Activated naive CD4-positive, alpha-beta T cell treated with anti-CD3 and anti-CD28 coated beads for 36 hours (primary cell): ENCODE measurements at regions of chr11 and their contacts with region 1.

Region 1: GRCh38 chr11:110429731-110430266 is at the start of gene FDX1:
- DNase-seq: peak; percentile 86
- H3K4me3 Mint-ChIP-seq: peak within 1 kb of the TSS; percentile 98
- H3K27ac Mint-ChIP-seq: peak within 1 kb of the TSS; percentile 93
- H3K4me1 Mint-ChIP-seq: peaks cover 40% of the 10 kb centered on the region
- H3K27me3 Mint-ChIP-seq: no peaks in the 10 kb centered on the region
- total RNA-seq, gene FDX1: 12.3 to 13.4 TPM

Region 2: GRCh38 chr11:109946322-109946846 is 483.4 kb before region 1 on chr11:
- CTCF ChIA-PET with region 1: interaction called, 3 read pairs
- intact Hi-C with region 1: loop called (anchors 1 kb)
- DNase-seq: peak; percentile 83
- H3K4me3 Mint-ChIP-seq: peak overlapping the region; percentile 3
- H3K27ac Mint-ChIP-seq: no peak overlapping the region
- H3K4me1 Mint-ChIP-seq: peaks cover 6% of the 10 kb centered on the region
- H3K27me3 Mint-ChIP-seq: peaks cover 6% of the 10 kb centered on the region

Region 3: DNA sequence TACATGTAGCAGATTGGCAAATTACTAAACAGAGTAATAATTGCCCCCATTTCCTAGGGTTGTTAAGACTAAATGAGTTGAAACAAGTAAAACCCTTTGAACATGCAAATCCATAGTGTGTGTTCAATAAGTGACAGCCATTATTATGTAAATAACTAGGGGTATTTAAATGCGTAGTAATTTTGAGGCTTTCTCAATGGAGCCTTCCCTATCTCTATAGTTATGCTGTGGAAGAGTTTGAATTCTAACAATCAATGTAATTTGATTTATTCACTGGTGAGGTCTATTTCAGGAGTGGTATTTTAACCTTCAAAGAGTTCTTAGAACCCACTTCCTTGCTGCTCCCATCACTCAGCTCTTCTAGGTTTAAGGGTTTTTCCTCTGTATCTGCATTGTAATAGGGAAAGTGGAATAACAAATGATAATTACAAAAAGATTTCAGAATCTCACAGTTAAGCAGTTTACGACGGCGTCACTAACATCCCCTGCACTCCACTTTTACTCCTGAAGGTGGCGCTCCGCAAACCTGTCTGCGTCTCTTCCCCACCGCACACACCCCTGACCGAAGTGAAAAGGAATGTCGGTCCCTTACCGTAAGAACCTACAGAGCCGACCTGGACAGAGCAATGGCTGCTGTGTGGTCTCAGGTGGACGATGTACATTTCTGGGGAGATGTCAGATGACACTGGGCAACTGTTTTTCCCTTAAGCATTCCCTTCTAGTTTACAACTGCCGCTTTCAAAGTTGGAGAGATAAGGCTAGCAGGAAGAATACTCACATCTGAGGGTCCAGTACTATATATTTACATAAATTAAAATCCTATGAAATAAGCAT is 255.8 kb before region 1 on chr11:
- CTCF ChIA-PET with region 1: no interaction called
- intact Hi-C with region 1: loop called (anchors 1 kb)
- DNase-seq: peak; percentile 83
- H3K4me3 Mint-ChIP-seq: no peak overlapping the region
- H3K27ac Mint-ChIP-seq: no peak overlapping the region
- H3K4me1 Mint-ChIP-seq: peaks cover 6% of the 10 kb centered on the region
- H3K27me3 Mint-ChIP-seq: peaks cover 4% of the 10 kb centered on the region

Region 4: DNA sequence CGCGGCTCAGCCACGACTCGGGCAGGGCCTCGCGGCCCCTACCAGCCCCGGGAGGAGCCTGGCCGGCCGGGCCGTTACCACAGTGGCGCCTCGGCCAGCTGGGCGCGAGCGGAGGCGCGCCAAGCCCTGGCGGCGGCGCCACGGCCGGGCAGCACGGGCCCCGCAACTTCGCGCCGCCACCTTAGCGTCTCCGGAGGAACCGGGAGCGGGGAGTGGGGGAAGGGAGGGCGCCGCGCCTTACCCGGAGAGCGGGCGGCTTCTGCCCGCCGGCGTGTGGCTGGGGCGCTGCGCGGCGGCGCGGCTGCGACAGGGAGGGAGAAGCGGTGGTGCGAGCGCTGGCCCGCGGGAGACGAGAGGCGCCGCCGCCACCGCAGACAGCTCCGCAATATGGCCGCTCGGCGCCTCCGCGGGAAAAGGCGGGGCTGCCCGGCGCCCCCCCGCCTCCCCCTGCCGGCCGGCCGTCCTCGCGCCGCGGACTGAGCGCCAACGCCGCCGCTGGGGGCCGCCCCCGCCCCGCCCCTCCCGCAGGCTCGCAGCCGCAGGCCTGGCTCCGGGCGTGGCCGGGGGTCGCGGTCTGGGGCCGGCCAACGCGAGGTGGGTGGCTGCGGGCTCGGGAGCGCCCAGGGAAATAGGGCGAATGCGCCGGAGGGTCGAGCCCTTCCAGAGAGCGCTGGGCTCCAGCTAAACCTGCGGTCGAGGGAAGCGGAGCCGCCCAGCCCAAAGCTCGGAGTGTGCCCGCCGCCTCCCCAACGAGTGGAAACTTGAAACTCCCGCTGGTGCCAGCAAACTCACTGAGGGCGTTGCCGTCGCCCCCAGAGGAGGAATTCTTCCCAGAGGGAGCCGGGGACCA is 133.3 kb before region 1 on chr11 and contains the start of gene RDX:
- CTCF ChIA-PET with region 1: no interaction called
- intact Hi-C with region 1: loop called (anchors 1 kb)
- DNase-seq: peak; percentile 53
- H3K4me3 Mint-ChIP-seq: peak within 1 kb of the TSS; percentile 91
- H3K27ac Mint-ChIP-seq: peak within 1 kb of the TSS; percentile 83
- H3K4me1 Mint-ChIP-seq: peaks cover 39% of the 10 kb centered on the region
- H3K27me3 Mint-ChIP-seq: no peaks in the 10 kb centered on the region
- total RNA-seq, gene RDX: 35.2 to 37.4 TPM

Region 5: DNA sequence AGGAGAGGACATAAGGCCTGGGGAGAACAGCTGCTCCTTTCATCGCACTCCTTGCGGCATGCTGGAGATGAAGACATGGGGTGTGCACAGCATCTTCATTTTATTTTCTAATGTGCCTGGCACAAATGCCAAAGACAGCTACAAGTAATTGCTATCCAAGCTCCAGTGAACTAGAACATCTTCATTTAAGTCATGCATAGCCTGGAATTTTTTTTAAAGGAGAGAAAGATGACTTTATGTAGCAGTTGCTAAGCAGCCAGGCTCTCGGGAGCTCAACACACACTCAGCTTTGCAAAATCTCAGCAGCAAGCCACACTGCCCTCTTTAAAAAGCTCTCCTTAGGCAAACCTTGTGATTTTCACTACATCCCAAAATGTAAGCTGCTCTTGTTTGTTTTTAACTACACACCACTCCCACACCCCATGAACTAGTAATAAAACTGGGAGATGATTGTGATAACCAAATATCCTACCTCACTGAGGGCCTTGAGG is 651.3 kb after region 1 on chr11:
- CTCF ChIA-PET with region 1: no interaction called
- intact Hi-C with region 1: no loop called
- DNase-seq: no peak
- H3K4me3 Mint-ChIP-seq: no peak overlapping the region
- H3K27ac Mint-ChIP-seq: no peak overlapping the region
- H3K4me1 Mint-ChIP-seq: no peaks in the 10 kb centered on the region
- H3K27me3 Mint-ChIP-seq: no peaks in the 10 kb centered on the region

Region 6: GRCh38 chr11:111378861-111379601 is 949.2 kb after region 1 on chr11 and contains the start of gene POU2AF1:
- CTCF ChIA-PET with region 1: no interaction called
- intact Hi-C with region 1: loop called (anchors 5 kb)
- DNase-seq: peak; percentile 81
- H3K4me3 Mint-ChIP-seq: peak within 1 kb of the TSS; percentile 71
- H3K27ac Mint-ChIP-seq: peak within 1 kb of the TSS; percentile 86
- H3K4me1 Mint-ChIP-seq: peaks cover 58% of the 10 kb centered on the region
- H3K27me3 Mint-ChIP-seq: no peaks in the 10 kb centered on the region
- total RNA-seq, gene POU2AF1: 0.48 to 0.62 TPM